ENCODE measurements at regions of chr1 and their contacts with region 1.

Region 1: GRCh38 chr1:27284425-27285273 is 37.3 kb upstream of the TMEM222 start:
- DNase-seq: no peak
- H3K4me3 ChIP-seq: no peak overlapping the region
- CTCF ChIP-seq: peak; percentile 73

Region 2: GRCh38 chr1:27111626-27112573 is 172.7 kb before region 1 on chr1:
- CTCF ChIA-PET with region 1: interaction called, 408 read pairs
- POLR2A ChIA-PET with region 1: no interaction called
- DNase-seq: peak; percentile 98
- H3K4me3 ChIP-seq: no peak overlapping the region
- CTCF ChIP-seq: peak; percentile 72

Region 3: DNA sequence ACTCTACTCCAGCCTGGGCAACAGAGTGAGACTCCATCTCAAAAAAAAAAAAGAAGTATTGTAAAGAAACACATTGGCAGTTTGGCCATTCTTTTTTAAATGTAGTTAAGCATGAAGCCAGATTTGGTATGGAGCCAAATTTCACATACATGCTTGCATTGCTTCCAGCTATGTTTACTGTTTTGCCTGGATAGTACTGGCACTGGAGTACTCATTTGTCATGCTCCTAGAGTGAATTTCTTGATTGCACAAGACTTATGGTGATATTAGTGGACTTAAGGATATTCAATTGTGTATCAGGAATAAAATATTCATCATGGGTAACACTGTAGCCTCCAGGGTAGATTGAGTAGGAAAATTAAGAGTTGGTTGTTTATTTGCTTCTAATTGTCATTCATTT is 105.3 kb before region 1 on chr1:
- CTCF ChIA-PET with region 1: no interaction called
- POLR2A ChIA-PET with region 1: no interaction called
- DNase-seq: no peak
- H3K4me3 ChIP-seq: no peak overlapping the region
- CTCF ChIP-seq: no peak

Region 4: GRCh38 chr1:27192039-27192529 is 92.6 kb before region 1 on chr1:
- CTCF ChIA-PET with region 1: interaction called, 70 read pairs
- POLR2A ChIA-PET with region 1: no interaction called
- DNase-seq: no peak
- H3K4me3 ChIP-seq: no peak overlapping the region
- CTCF ChIP-seq: no peak

Region 5: DNA sequence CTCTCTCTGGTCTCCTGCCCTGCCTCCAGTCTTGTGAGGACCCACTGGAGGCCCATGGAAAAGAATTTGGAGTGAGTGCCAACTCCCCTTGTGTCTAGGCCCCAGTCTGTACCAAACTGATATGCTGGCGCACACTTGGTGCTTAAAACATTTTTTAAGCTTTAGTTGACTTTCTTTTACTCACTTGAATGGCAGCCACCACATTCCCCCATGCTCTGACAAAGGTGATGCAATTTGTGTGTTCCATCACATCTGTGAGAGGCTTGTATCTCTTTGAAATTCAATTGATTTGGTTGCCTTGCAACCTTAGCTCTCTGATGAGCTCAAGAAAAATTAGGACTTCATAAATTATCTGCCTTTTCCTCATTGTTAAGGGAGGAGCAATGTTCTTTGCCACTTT is 80.7 kb before region 1 on chr1:
- CTCF ChIA-PET with region 1: interaction called, 70 read pairs
- POLR2A ChIA-PET with region 1: no interaction called
- DNase-seq: no peak
- H3K4me3 ChIP-seq: no peak overlapping the region
- CTCF ChIP-seq: no peak

Region 6: DNA sequence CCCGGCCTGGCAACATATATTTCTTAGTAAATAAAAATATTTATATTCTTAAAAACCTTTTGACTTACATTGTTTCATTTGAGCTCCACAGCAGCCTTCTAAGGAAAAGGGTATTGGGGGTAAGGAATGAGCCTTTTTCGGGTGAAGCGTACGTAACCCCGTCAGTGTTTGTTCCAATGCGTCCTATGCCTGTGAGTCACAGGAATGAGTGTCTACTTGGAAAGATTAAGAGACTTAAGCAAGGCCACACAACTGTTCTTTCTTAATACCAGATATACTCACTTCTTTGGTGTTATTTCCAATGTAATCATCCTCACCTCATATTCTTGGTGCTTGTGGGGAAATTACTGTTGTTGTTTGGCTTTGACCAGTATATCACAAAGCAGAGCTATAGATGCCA is 27.5 kb before region 1 on chr1:
- CTCF ChIA-PET with region 1: interaction called, 12 read pairs
- POLR2A ChIA-PET with region 1: no interaction called
- DNase-seq: no peak
- H3K4me3 ChIP-seq: no peak overlapping the region
- CTCF ChIP-seq: no peak

Region 7: GRCh38 chr1:27267153-27267552 is 17.5 kb before region 1 on chr1:
- CTCF ChIA-PET with region 1: interaction called, 90 read pairs
- POLR2A ChIA-PET with region 1: interaction called, 3 read pairs
- DNase-seq: no peak
- H3K4me3 ChIP-seq: no peak overlapping the region
- CTCF ChIP-seq: no peak

Region 8: DNA sequence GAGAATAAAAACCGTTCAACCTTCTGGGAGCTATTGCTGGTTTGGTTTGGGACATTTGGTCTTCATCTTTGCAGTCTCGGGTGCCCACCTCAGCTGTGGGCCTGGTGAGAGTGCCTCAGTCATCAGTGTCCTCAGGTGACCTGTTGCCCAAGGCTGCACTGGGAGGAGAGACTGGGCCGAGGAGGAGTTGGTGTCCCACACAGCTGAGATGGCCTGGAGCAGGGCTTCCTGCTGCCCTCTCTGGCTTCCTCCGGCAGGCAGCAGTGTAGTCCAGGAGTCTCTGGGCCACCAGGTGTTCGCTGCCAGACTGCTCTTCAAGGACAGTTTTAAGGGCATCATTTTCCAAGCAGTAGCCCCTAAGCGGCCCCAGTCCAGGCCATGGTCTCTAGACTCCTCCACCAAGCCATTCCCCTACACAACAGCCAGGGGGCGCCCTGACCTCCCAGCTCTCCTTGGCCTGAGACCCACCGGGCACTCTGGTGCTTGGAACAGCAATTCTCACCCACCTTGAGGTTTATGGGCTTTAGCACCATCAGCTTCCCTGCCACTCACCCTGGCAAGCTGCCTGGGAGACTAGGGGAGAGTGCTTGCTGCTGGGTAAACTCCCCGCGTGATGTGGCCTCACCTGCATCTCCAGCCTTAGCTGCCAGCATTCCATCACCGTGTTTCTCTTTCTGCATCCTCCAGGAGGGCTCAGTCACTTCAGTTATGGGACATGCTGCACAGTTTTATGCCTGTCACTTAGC is 48.1 kb after region 1 on chr1:
- CTCF ChIA-PET with region 1: no interaction called
- POLR2A ChIA-PET with region 1: no interaction called
- DNase-seq: no peak
- H3K4me3 ChIP-seq: no peak overlapping the region
- CTCF ChIP-seq: peak; percentile 85

Measured in AG04449 (cell line).